ENCODE measurements at regions of chrX and their contacts with region 1.

Region 1: GRCh38 chrX:109856974-109857373 is 123.9 kb upstream of the ACSL4 start:
- DNase-seq: no peak
- ATAC-seq: peak in 3 of 4 donors; percentile 36 to 62 (median 43)
- H3K4me3 ChIP-seq: no peak overlapping the region
- H3K27ac ChIP-seq: no peak overlapping the region
- H3K4me1 ChIP-seq: no peaks in the 10 kb centered on the region
- H3K27me3 ChIP-seq: no peaks in the 10 kb centered on the region
- CTCF ChIP-seq: peak; percentile 56 to 83 (median 72)

Region 2: DNA sequence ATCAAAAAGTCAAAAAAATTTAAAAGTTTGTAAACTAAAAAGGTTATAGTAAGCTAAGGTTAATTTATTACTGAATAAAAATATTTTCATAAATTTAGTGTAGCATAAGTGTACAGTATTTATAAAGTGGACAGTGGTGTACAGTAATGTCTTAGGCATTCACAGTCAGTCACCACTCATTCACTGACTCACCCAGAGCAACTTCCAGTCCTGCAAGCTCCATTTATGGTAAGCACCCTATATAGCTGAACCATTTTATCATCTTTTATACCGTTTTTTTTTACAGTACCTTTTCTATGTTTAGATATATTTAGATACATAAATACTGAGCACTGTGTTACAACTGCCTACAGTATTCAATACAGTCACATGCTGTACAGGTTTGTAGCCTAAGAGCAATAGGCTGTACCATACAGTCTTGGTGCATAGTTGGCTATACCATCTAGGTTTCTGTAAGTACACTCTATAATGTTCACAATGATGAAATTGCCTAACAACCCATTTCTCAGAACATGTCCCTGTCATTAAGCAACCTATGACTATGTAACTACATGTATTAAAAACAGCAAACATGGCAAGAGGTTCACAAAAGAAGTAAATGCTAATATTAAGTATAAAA is 142.5 kb before region 1 on chrX:
- intact Hi-C with region 1: loop called in 1 of 3 experiments (anchors 10 kb)
- DNase-seq: no peak
- ATAC-seq: no peak
- H3K4me3 ChIP-seq: no peak overlapping the region
- H3K27ac ChIP-seq: no peak overlapping the region
- H3K4me1 ChIP-seq: no peaks in the 10 kb centered on the region
- H3K27me3 ChIP-seq: no peaks in the 10 kb centered on the region
- CTCF ChIP-seq: no peak

Region 3: GRCh38 chrX:109974906-109975655 is 118.1 kb after region 1 on chrX:
- intact Hi-C with region 1: no loop called
- DNase-seq: no peak
- ATAC-seq: no peak
- H3K4me3 ChIP-seq: no peak overlapping the region
- H3K27ac ChIP-seq: no peak overlapping the region
- H3K4me1 ChIP-seq: no peaks in the 10 kb centered on the region
- H3K27me3 ChIP-seq: peaks cover 0 to 4% (median 0%) of the 10 kb centered on the region in 4 donors
- CTCF ChIP-seq: no peak